ENCODE measurements at regions of chr2 and their contacts with region 1.

Region 1: GRCh38 chr2:216698895-216699294 is 3.5 kb upstream of the IGFBP5 start:
- DNase-seq: peak; percentile 61
- ATAC-seq: peak; percentile 86
- H3K4me3 ChIP-seq: no peak overlapping the region
- H3K27ac ChIP-seq: no peak overlapping the region
- H3K4me1 ChIP-seq: no peaks in the 10 kb centered on the region
- H3K27me3 ChIP-seq: peaks cover 5 to 60% of the 10 kb centered on the region in 2 experiments; a peak in 4 of 5 replicates
- CTCF ChIP-seq: peak; percentile 92
- EP300 ChIP-seq: no peak
- POLR2A ChIP-seq: no peak
- RAD21 ChIP-seq: peak; percentile 80

Region 2: DNA sequence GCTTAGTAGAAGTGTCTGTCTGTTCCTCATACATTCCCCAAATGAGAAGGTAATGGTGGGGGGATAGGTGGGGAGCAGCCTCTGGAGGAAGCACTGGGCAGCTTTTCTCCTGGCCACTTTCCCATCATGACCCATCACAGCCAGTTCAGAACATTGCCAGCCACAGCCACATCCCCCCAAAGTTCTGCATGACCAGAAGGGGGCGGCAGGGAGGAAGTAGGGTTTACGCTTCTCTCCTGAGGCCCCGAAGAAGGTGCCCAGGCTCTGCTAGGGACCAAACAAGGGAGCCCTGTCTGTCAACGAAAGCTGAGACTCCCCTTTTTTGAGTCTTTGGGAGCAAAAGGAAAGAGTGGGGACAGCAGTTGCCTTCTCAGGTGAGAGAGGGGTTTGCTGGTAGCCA is 11.2 kb before region 1 on chr2:
- CTCF ChIA-PET with region 1: no interaction called
- POLR2A ChIA-PET with region 1: no interaction called
- in situ Hi-C with region 1: no loop called
- intact Hi-C with region 1: no loop called
- DNase-seq: peak; percentile 13
- ATAC-seq: peak; percentile 69
- H3K4me3 ChIP-seq: no peak overlapping the region
- H3K27ac ChIP-seq: no peak overlapping the region
- H3K4me1 ChIP-seq: no peaks in the 10 kb centered on the region
- H3K27me3 ChIP-seq: peaks cover 20 to 40% of the 10 kb centered on the region in 2 experiments
- CTCF ChIP-seq: peak; percentile 58
- EP300 ChIP-seq: no peak
- POLR2A ChIP-seq: no peak
- RAD21 ChIP-seq: 0 out of 2 replicates have a peak, but pooled peaks have one; percentile 26

Region 3: GRCh38 chr2:216727346-216728122 is 28.6 kb after region 1 on chr2:
- CTCF ChIA-PET with region 1: no interaction called
- POLR2A ChIA-PET with region 1: no interaction called
- in situ Hi-C with region 1: no loop called
- intact Hi-C with region 1: no loop called
- DNase-seq: no peak
- ATAC-seq: no peak
- H3K4me3 ChIP-seq: no peak overlapping the region
- H3K27ac ChIP-seq: no peak overlapping the region
- H3K4me1 ChIP-seq: no peaks in the 10 kb centered on the region
- H3K27me3 ChIP-seq: peaks cover 0 to 22% of the 10 kb centered on the region in 2 experiments; a peak in 3 of 5 replicates
- CTCF ChIP-seq: no peak
- EP300 ChIP-seq: no peak
- POLR2A ChIP-seq: no peak
- RAD21 ChIP-seq: no peak

Region 4: DNA sequence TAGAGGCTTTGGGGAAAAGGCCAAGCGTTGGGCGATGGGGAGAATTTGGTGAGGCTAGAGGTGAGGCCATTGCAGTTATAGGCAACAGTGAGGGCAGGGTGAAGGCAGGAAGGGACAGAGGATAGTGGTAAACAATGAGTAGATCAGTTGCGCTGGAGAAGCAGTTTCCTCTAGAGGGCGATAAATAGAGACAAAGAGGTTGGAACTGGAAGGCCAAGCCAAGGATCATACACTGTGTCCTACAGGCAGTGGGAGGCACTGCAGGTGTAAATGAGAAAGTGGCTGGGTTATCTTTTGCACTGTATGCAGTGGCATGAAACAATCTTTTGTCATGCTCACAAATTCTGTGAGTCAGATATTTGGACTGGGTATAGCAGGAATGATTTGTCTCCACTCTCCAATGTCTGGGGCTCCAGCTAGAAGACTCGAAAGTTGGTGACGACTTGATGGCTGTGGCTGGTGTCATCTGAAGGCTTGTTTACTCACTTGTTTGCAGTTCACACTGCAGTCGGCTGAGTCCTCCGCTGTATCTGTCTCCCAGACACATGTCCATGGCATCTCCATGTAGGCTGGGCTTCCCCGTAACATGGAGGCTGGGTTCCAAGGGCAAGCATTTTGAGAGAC is 78.9 kb after region 1 on chr2:
- CTCF ChIA-PET with region 1: no interaction called
- POLR2A ChIA-PET with region 1: no interaction called
- in situ Hi-C with region 1: no loop called
- intact Hi-C with region 1: loop called (anchors 5 kb)
- DNase-seq: peak; percentile 89
- ATAC-seq: peak; percentile 98
- H3K4me3 ChIP-seq: no peak overlapping the region
- H3K27ac ChIP-seq: no peak overlapping the region
- H3K4me1 ChIP-seq: peaks cover 16% of the 10 kb centered on the region
- H3K27me3 ChIP-seq: peaks cover 0 to 16% of the 10 kb centered on the region in 2 experiments; a peak in 2 of 5 replicates
- CTCF ChIP-seq: peak; percentile 88
- EP300 ChIP-seq: peak in 1 of 2 experiments; percentile 42; a peak in 1 of 4 replicates
- POLR2A ChIP-seq: no peak
- RAD21 ChIP-seq: peak; percentile 87

Region 5: GRCh38 chr2:216987181-216987791 is 288.4 kb after region 1 on chr2:
- CTCF ChIA-PET with region 1: no interaction called
- POLR2A ChIA-PET with region 1: no interaction called
- in situ Hi-C with region 1: no loop called
- intact Hi-C with region 1: loop called (anchors 2 kb)
- DNase-seq: no peak
- ATAC-seq: no peak
- H3K4me3 ChIP-seq: no peak overlapping the region
- H3K27ac ChIP-seq: no peak overlapping the region
- H3K4me1 ChIP-seq: no peaks in the 10 kb centered on the region
- H3K27me3 ChIP-seq: peaks cover 0 to 8% of the 10 kb centered on the region in 2 experiments; a peak in 2 of 5 replicates
- CTCF ChIP-seq: no peak
- EP300 ChIP-seq: no peak
- POLR2A ChIP-seq: no peak
- RAD21 ChIP-seq: no peak

Region 6: GRCh38 chr2:217142649-217143266 is 443.9 kb after region 1 on chr2:
- CTCF ChIA-PET with region 1: interaction called, 22 read pairs
- POLR2A ChIA-PET with region 1: no interaction called
- in situ Hi-C with region 1: loop called (anchors 5 kb)
- intact Hi-C with region 1: loop called (anchors 1 kb)
- DNase-seq: peak; percentile 38
- ATAC-seq: peak; percentile 64
- H3K4me3 ChIP-seq: no peak overlapping the region
- H3K27ac ChIP-seq: no peak overlapping the region
- H3K4me1 ChIP-seq: no peaks in the 10 kb centered on the region
- H3K27me3 ChIP-seq: 0 out of 5 replicates have a peak, but pooled peaks cover 0 to under 1% of the 10 kb centered on the region in 2 experiments
- CTCF ChIP-seq: peak; percentile 76
- EP300 ChIP-seq: no peak
- POLR2A ChIP-seq: no peak
- RAD21 ChIP-seq: peak; percentile 55; the same call in 1 of the 2 replicates

Region 7: GRCh38 chr2:217166241-217166850 is 467.5 kb after region 1 on chr2:
- CTCF ChIA-PET with region 1: interaction called, 3 read pairs
- POLR2A ChIA-PET with region 1: no interaction called
- in situ Hi-C with region 1: no loop called
- intact Hi-C with region 1: loop called (anchors 1 kb)
- DNase-seq: peak; percentile 46
- ATAC-seq: peak; percentile 89
- H3K4me3 ChIP-seq: no peak overlapping the region
- H3K27ac ChIP-seq: no peak overlapping the region
- H3K4me1 ChIP-seq: no peaks in the 10 kb centered on the region
- H3K27me3 ChIP-seq: peaks cover 0 to 6% of the 10 kb centered on the region in 2 experiments; a peak in 1 of 5 replicates
- CTCF ChIP-seq: peak; percentile 74
- EP300 ChIP-seq: no peak
- POLR2A ChIP-seq: no peak
- RAD21 ChIP-seq: peak; percentile 41; the same call in 1 of the 2 replicates

Region 8: GRCh38 chr2:217331523-217332139 is 632.7 kb after region 1 on chr2:
- CTCF ChIA-PET with region 1: no interaction called
- POLR2A ChIA-PET with region 1: no interaction called
- in situ Hi-C with region 1: no loop called
- intact Hi-C with region 1: loop called (anchors 10 kb)
- DNase-seq: peak; percentile 99
- ATAC-seq: peak; percentile 98
- H3K4me3 ChIP-seq: peak overlapping the region in 1 of 3 experiments; percentile 24; a peak in 1 of 6 replicates
- H3K27ac ChIP-seq: peak overlapping the region; percentile 85
- H3K4me1 ChIP-seq: peaks cover 58% of the 10 kb centered on the region
- H3K27me3 ChIP-seq: no peaks in the 10 kb centered on the region
- CTCF ChIP-seq: no peak
- EP300 ChIP-seq: peak in 1 of 2 experiments; percentile 93; a peak in 2 of 4 replicates
- POLR2A ChIP-seq: peak in 1 of 2 experiments; percentile 50; a peak in 1 of 4 replicates
- RAD21 ChIP-seq: no peak

Region 9: GRCh38 chr2:217713395-217714286 is 1014.7 kb after region 1 on chr2:
- CTCF ChIA-PET with region 1: no interaction called
- POLR2A ChIA-PET with region 1: no interaction called
- in situ Hi-C with region 1: loop called (anchors 5 kb)
- intact Hi-C with region 1: loop called (anchors 5 kb)
- DNase-seq: peak; percentile 55
- ATAC-seq: peak; percentile 89
- H3K4me3 ChIP-seq: no peak overlapping the region
- H3K27ac ChIP-seq: no peak overlapping the region
- H3K4me1 ChIP-seq: no peaks in the 10 kb centered on the region
- H3K27me3 ChIP-seq: peaks cover 2 to 41% of the 10 kb centered on the region in 2 experiments; a peak in 3 of 5 replicates
- CTCF ChIP-seq: peak; percentile 97
- EP300 ChIP-seq: no peak
- POLR2A ChIP-seq: no peak
- RAD21 ChIP-seq: peak; percentile 93